Common myeloid progenitor, CD34-positive (primary cell): ENCODE measurements at regions of chr6 and their contacts with region 1.

Region 1: GRCh38 chr6:53309059-53309900 is 39.5 kb downstream of the ELOVL5 start:
- DNase-seq: peak in 2 of 3 donors; percentile 86 to 91
- H3K4me3 ChIP-seq: peak overlapping the region in 2 of 7 experiments; percentile 0 to 45
- H3K27ac ChIP-seq: peak overlapping the region; percentile 74 to 88
- H3K4me1 ChIP-seq: peaks cover 34 to 71% (median 57%) of the 10 kb centered on the region in 4 experiments
- H3K27me3 ChIP-seq: no peaks in the 10 kb centered on the region

Region 2: DNA sequence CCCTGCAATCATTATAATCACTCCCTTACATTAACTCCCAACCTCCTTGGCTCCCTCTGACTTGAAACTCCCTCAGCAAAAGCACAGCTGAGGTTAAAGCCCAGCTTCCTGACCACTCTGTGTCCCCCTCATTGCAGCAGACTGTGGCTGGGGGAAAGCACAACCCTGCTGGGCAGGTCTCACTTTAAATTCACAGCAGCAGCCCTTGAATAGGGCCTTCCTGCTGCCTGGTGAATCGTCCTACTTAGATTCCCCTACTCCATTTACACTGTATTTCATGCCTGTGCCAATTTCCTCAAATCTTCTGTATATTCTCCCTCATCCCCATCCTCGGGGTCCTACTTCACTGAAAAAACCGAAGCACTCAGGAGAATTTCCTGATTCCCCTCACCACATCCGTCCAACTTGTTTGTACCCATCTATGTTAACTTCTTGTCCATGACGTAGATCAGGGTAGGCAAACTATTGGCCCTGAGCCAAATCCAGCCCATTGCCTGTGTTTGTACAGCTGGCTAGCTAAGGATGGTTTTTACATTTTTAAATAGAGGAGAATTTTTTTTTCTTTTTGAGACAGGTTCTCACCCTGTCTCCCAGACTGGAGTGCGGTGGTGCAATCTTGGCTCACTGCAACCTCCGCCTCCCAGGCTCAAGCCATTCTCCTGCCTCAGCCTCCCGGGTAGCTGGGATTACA is 129.2 kb before region 1 on chr6:
- CTCF ChIA-PET with region 1: no interaction called
- POLR2A ChIA-PET with region 1: no interaction called
- DNase-seq: peak; percentile 62 to 80 (median 78)
- H3K4me3 ChIP-seq: peak overlapping the region in 1 of 7 experiments; percentile 25
- H3K27ac ChIP-seq: no peak overlapping the region
- H3K4me1 ChIP-seq: peaks cover 0 to 9% (median 7%) of the 10 kb centered on the region in 4 experiments
- H3K27me3 ChIP-seq: no peaks in the 10 kb centered on the region

Region 3: DNA sequence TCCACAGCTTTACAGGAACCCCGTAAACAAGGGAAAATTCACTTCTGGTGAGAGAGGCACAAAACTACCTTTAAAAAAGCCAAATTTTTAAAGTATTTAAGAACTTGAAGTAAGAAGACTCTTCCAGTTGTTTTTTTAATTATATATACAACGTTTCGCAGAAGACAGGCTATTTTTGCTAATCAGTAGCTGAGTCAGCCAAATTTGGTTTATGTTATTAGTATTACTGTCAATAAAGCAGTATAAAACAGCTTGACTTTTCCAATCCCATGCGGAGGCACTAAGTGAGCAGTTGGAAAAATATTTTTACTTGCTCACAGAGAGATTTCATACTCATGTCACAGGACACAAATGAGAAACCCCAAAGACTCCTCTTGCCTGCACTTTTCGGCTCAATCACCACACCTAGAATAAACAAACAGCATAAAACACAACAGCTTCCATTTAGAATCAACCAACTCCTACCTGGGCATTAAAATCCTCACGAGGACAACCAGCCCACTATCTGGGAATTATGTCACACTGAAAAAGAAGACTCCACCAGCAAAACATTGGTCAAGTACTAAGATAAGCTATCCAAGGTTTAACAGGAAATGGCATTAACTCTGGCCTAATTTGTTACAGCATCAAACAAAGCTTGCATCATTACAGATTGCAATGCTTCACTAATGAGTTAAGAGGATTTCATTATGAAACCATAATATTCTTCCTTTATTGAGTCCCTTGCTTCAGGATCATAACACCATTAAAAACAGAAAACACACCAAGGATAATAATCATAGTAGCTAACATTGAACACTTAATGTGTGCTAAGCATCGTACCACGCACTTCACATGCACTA is 13.1 kb after region 1 on chr6:
- CTCF ChIA-PET with region 1: interaction called, 22 read pairs
- POLR2A ChIA-PET with region 1: no interaction called
- DNase-seq: no peak
- H3K4me3 ChIP-seq: no peak overlapping the region
- H3K27ac ChIP-seq: peak overlapping the region in 1 of 2 experiments; percentile 29
- H3K4me1 ChIP-seq: peaks cover 0 to 21% (median 2%) of the 10 kb centered on the region in 4 experiments
- H3K27me3 ChIP-seq: no peaks in the 10 kb centered on the region

Region 4: GRCh38 chr6:53330137-53330536 is 20.9 kb after region 1 on chr6:
- CTCF ChIA-PET with region 1: interaction called, 10 read pairs
- POLR2A ChIA-PET with region 1: interaction called, 3 read pairs
- DNase-seq: no peak
- H3K4me3 ChIP-seq: no peak overlapping the region
- H3K27ac ChIP-seq: no peak overlapping the region
- H3K4me1 ChIP-seq: peaks cover 14 to 33% (median 16%) of the 10 kb centered on the region in 4 experiments
- H3K27me3 ChIP-seq: no peaks in the 10 kb centered on the region

Region 5: GRCh38 chr6:53348371-53349208 is 39.3 kb after region 1 on chr6 and contains the start of gene ELOVL5:
- CTCF ChIA-PET with region 1: interaction called, 11 read pairs
- POLR2A ChIA-PET with region 1: interaction called, 4 read pairs
- DNase-seq: peak; percentile 99
- H3K4me3 ChIP-seq: peak within 1 kb of the TSS; percentile 84 to 95 (median 91)
- H3K27ac ChIP-seq: peak within 1 kb of the TSS; percentile 87 to 91
- H3K4me1 ChIP-seq: peaks cover 14 to 28% (median 24%) of the 10 kb centered on the region in 4 experiments
- H3K27me3 ChIP-seq: no peaks in the 10 kb centered on the region